A549 (cell line): ENCODE measurements at regions of chrX and their contacts with region 1.

Region 1: GRCh38 chrX:136028251-136028984 is 43.2 kb downstream of the SLC9A6 start:
- DNase-seq: peak; percentile 28 to 55
- ATAC-seq: peak; percentile 74 to 86; a peak in 5 of 6 replicates
- H3K4me3 ChIP-seq: no peak overlapping the region
- H3K27ac ChIP-seq: no peak overlapping the region
- H3K4me1 ChIP-seq: no peaks in the 10 kb centered on the region
- CTCF ChIP-seq: peak; percentile 79
- EP300 ChIP-seq: no peak
- POLR2A ChIP-seq: no peak
- RAD21 ChIP-seq: peak; percentile 77 to 80

Region 2: GRCh38 chrX:135981010-135981409 is 47.4 kb before region 1 on chrX:
- CTCF ChIA-PET with region 1: no interaction called
- POLR2A ChIA-PET with region 1: no interaction called
- DNase-seq: no peak
- ATAC-seq: no peak
- H3K4me3 ChIP-seq: no peak overlapping the region
- H3K27ac ChIP-seq: no peak overlapping the region
- H3K4me1 ChIP-seq: peaks cover 15% of the 10 kb centered on the region; the same call in 2 of the 3 replicates
- CTCF ChIP-seq: no peak
- EP300 ChIP-seq: no peak
- POLR2A ChIP-seq: no peak
- RAD21 ChIP-seq: no peak

Region 3: GRCh38 chrX:136039968-136040367 is 11.6 kb after region 1 on chrX:
- CTCF ChIA-PET with region 1: interaction called, 38 read pairs
- POLR2A ChIA-PET with region 1: no interaction called
- DNase-seq: no peak
- ATAC-seq: no peak
- H3K4me3 ChIP-seq: no peak overlapping the region
- H3K27ac ChIP-seq: no peak overlapping the region
- H3K4me1 ChIP-seq: no peaks in the 10 kb centered on the region
- CTCF ChIP-seq: no peak
- EP300 ChIP-seq: no peak
- POLR2A ChIP-seq: no peak
- RAD21 ChIP-seq: no peak

Region 4: GRCh38 chrX:136162831-136163570 is 134.6 kb after region 1 on chrX:
- CTCF ChIA-PET with region 1: interaction called, 124 read pairs
- POLR2A ChIA-PET with region 1: interaction called, 6 read pairs
- DNase-seq: peak; percentile 59 to 60
- ATAC-seq: peak; percentile 99 to 100
- H3K4me3 ChIP-seq: no peak overlapping the region
- H3K27ac ChIP-seq: 0 out of 6 replicates have a peak overlapping the region, but pooled peaks of 1 of the 2 experiments have one; percentile 8
- H3K4me1 ChIP-seq: no peaks in the 10 kb centered on the region
- CTCF ChIP-seq: peak; percentile 62
- EP300 ChIP-seq: no peak
- POLR2A ChIP-seq: no peak
- RAD21 ChIP-seq: peak; percentile 61 to 70

Region 5: GRCh38 chrX:136209016-136209738 is 180.8 kb after region 1 on chrX:
- CTCF ChIA-PET with region 1: interaction called, 82 read pairs
- POLR2A ChIA-PET with region 1: interaction called, 5 read pairs
- DNase-seq: peak; percentile 43 to 60
- ATAC-seq: peak; percentile 84 to 90; a peak in 5 of 6 replicates
- H3K4me3 ChIP-seq: no peak overlapping the region
- H3K27ac ChIP-seq: peak overlapping the region in 1 of 2 experiments; percentile 17; a peak in 1 of 6 replicates
- H3K4me1 ChIP-seq: peaks cover 9% of the 10 kb centered on the region
- CTCF ChIP-seq: peak; percentile 52
- EP300 ChIP-seq: no peak
- POLR2A ChIP-seq: no peak
- RAD21 ChIP-seq: peak; percentile 62 to 65

Region 6: GRCh38 chrX:136275553-136275952 is 247.1 kb after region 1 on chrX:
- CTCF ChIA-PET with region 1: interaction called, 11 read pairs
- POLR2A ChIA-PET with region 1: no interaction called
- DNase-seq: no peak
- ATAC-seq: 0 out of 6 replicates have a peak, but pooled peaks of 1 of the 2 experiments have one; percentile 30
- H3K4me3 ChIP-seq: no peak overlapping the region
- H3K27ac ChIP-seq: no peak overlapping the region
- H3K4me1 ChIP-seq: no peaks in the 10 kb centered on the region
- CTCF ChIP-seq: no peak
- EP300 ChIP-seq: no peak
- POLR2A ChIP-seq: no peak
- RAD21 ChIP-seq: no peak